Activated CD4-positive, alpha-beta T cell treated with anti-CD3 and anti-CD28 coated beads for 36 hours (primary cell): ENCODE measurements at regions of chr12 and their contacts with region 1.

Region 1: DNA sequence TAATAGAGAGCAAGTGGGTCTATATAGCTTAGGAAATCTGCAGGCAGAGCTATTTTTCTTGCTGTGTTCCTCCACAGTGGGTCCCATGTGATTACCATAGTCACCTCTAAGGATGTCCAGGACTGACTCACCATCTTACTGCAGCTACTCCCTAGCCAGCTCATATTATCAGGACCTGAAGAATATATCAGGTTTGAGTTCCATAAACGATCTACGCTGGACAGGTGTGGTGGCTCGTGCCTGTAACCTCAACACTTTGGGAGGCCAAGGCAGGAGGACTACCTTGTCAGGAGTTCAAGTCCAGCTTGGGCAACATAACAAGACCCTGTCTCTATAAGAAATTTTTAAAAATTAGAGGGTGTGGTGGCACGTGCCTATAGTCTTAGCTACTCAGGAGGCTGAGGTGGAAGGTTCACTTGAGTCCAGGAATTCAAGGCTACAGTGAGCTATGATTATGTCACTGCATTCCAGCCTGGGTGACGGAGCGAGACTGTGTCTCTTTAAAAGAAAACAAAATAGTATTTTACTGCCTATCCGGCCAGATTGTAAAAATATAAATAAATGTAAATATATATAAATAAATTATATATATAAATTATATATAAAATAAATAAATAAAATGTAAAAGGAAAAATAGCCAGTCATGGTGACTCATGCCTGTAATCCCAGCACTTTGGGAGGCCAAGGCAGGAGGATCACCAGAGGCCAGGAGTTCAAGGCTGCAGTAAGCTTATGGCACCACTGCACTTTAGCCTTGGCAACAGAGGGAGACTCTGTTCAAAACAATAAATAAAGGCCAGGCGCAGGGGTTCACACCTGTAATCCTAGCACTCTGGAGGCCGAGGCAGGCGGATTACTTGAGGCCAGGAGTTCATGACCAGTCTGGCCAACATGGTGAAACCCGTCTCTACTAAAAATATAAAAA is 6.9 kb upstream of the SPRYD4 start:
- DNase-seq: no peak
- ATAC-seq: no peak
- H3K4me3 Mint-ChIP-seq: no peak overlapping the region
- H3K27ac Mint-ChIP-seq: no peak overlapping the region
- H3K4me1 Mint-ChIP-seq: peaks cover 5% of the 10 kb centered on the region
- H3K27me3 Mint-ChIP-seq: no peaks in the 10 kb centered on the region

Region 2: DNA sequence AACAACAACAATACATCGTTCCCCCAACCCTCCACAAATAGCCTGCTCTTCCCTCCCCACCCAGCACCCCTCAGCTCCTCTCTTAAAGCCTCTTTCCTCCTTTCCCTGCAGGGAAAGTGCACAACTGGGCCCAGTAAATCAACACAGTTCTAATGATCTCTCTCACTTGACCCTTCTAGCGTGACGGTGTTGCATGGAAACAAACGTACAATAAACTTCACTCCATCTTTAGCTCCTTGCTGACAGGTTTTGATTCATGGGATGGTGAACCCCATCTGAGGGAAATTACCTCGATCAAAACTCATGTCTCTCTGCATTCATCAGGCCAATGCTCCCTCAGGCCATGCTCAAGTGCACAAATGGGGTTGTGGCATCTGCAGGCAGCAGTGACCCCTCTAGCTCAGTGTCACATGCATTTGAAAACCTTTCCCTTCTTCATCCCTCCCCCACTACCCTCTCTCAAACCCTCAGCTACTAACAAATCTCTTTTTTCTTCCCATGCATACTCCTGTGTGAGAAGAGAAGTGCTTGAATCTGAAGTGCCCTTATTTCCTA is 695.7 kb before region 1 on chr12:
- CTCF ChIA-PET with region 1: no interaction called
- POLR2A ChIA-PET with region 1: interaction called, 11 read pairs
- intact Hi-C with region 1: no loop called
- DNase-seq: no peak
- ATAC-seq: no peak
- H3K4me3 Mint-ChIP-seq: no peak overlapping the region
- H3K27ac Mint-ChIP-seq: peak overlapping the region; percentile 6
- H3K4me1 Mint-ChIP-seq: peaks cover 12% of the 10 kb centered on the region
- H3K27me3 Mint-ChIP-seq: no peaks in the 10 kb centered on the region

Region 3: GRCh38 chr12:56078990-56079664 is 382.4 kb before region 1 on chr12:
- CTCF ChIA-PET with region 1: no interaction called
- POLR2A ChIA-PET with region 1: no interaction called
- intact Hi-C with region 1: no loop called
- DNase-seq: peak; percentile 76
- ATAC-seq: peak; percentile 42
- H3K4me3 Mint-ChIP-seq: peak overlapping the region; percentile 74
- H3K27ac Mint-ChIP-seq: no peak overlapping the region
- H3K4me1 Mint-ChIP-seq: peaks cover 8% of the 10 kb centered on the region
- H3K27me3 Mint-ChIP-seq: peaks cover 6% of the 10 kb centered on the region

Region 4: GRCh38 chr12:57238854-57239554 is 777.5 kb after region 1 on chr12:
- CTCF ChIA-PET with region 1: no interaction called
- POLR2A ChIA-PET with region 1: no interaction called
- intact Hi-C with region 1: no loop called
- DNase-seq: peak; percentile 94
- ATAC-seq: peak; percentile 57
- H3K4me3 Mint-ChIP-seq: peak overlapping the region; percentile 83
- H3K27ac Mint-ChIP-seq: peak overlapping the region; percentile 80
- H3K4me1 Mint-ChIP-seq: peaks cover 70% of the 10 kb centered on the region
- H3K27me3 Mint-ChIP-seq: peaks cover 44% of the 10 kb centered on the region